Naive thymus-derived CD4-positive, alpha-beta T cell (primary cell): ENCODE measurements at regions of chr4 and their contacts with region 1.

Region 1: DNA sequence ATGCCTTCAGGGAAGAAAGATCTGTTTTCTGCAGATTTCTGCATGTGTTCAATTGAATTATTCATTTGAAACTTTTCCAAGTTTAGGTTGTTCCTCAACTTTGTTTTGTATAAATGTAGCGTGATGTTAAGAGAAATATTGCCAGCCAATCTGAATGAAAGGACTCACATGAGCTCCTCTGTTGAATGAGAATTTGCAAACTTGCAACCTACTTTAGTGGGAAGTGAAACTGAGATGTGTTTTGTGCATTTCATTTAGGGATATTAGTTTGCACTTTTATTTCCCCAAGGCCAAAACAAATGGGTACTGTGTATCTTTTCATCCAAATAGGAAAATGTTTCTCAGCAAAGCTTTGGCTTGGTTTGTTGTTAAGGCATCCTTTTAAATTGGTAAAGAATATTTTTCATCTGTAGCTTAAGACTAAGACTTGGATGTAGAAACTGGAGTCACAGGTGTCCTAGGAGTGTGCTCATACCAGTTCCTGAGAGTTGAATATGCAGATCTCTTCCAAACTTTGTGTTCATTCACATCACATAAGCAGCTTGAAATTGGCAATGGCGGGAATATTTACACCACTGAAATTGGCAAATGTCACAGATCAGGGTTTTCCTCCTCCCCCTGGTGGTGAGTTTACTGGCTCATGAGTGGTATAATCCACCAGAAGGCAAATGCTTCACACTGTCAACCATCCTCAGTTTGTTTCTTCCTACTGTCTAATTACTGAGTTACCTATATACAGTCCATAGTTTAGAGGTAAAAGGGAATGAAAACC is 193.6 kb upstream of the BANK1 start:
- DNase-seq: peak in 6 of 9 donors; percentile 2 to 33 (median 25)
- ATAC-seq: peak; percentile 32
- H3K4me3 ChIP-seq: no peak overlapping the region
- H3K4me3 Mint-ChIP-seq: no peak overlapping the region
- H3K27ac ChIP-seq: no peak overlapping the region
- H3K27ac Mint-ChIP-seq: no peak overlapping the region
- H3K4me1 ChIP-seq: no peaks in the 10 kb centered on the region
- H3K4me1 Mint-ChIP-seq: no peaks in the 10 kb centered on the region
- H3K27me3 ChIP-seq: no peaks in the 10 kb centered on the region
- H3K27me3 Mint-ChIP-seq: peaks cover 0 to 3% (median 0%) of the 10 kb centered on the region in 5 donors

Region 2: DNA sequence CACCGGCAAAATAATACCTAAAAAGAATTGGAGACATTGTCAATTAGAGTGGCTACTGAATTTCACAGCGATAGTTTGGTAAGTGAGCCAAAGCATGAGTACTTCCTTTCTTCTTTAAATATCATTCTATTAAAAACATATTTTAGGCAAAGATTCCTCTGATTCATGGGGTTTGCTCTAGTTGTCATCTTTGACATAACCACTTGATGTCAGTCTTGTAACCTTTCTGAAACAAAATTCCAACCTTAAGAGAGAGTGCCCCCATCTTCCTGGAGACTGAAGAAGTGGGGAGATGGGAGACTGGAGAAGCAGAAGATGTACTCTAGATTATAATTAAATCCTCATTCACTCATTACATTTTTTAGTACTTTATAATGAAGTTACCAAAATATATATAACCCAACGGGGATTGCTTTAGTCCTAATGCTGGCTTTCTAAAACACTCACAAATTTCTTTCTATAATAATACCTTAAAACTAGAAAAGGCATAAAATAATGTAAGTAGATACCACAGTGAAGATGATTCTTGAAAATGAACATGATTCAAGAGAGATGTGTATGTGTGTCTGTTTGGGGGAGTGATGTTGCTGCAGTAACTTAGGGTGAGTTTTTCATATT is 1175.5 kb before region 1 on chr4:
- CTCF ChIA-PET with region 1: no interaction called
- POLR2A ChIA-PET with region 1: no interaction called
- intact Hi-C with region 1: loop called in 1 of 2 experiments (anchors 1 kb)
- DNase-seq: peak in 3 of 9 donors; percentile 1 to 10 (median 1)
- ATAC-seq: no peak
- H3K4me3 ChIP-seq: no peak overlapping the region
- H3K4me3 Mint-ChIP-seq: no peak overlapping the region
- H3K27ac ChIP-seq: no peak overlapping the region
- H3K27ac Mint-ChIP-seq: no peak overlapping the region
- H3K4me1 ChIP-seq: no peaks in the 10 kb centered on the region
- H3K4me1 Mint-ChIP-seq: peaks cover 0 to 4% (median 0%) of the 10 kb centered on the region in 7 donors
- H3K27me3 ChIP-seq: no peaks in the 10 kb centered on the region
- H3K27me3 Mint-ChIP-seq: peaks cover 0 to 9% (median 0%) of the 10 kb centered on the region in 5 donors

Region 3: GRCh38 chr4:100848869-100849268 is 748.1 kb before region 1 on chr4:
- CTCF ChIA-PET with region 1: no interaction called
- POLR2A ChIA-PET with region 1: no interaction called
- intact Hi-C with region 1: loop called in 1 of 2 experiments (anchors 1 kb)
- DNase-seq: peak in 1 of 9 donors; percentile 1
- ATAC-seq: no peak
- H3K4me3 ChIP-seq: no peak overlapping the region
- H3K4me3 Mint-ChIP-seq: no peak overlapping the region
- H3K27ac ChIP-seq: no peak overlapping the region
- H3K27ac Mint-ChIP-seq: no peak overlapping the region
- H3K4me1 ChIP-seq: no peaks in the 10 kb centered on the region
- H3K4me1 Mint-ChIP-seq: no peaks in the 10 kb centered on the region
- H3K27me3 ChIP-seq: no peaks in the 10 kb centered on the region
- H3K27me3 Mint-ChIP-seq: no peaks in the 10 kb centered on the region

Region 4: GRCh38 chr4:100935090-100935489 is 661.9 kb before region 1 on chr4:
- CTCF ChIA-PET with region 1: interaction called, 5 read pairs
- POLR2A ChIA-PET with region 1: no interaction called
- intact Hi-C with region 1: loop called in 1 of 2 experiments (anchors 10 kb)
- DNase-seq: no peak
- ATAC-seq: no peak
- H3K4me3 ChIP-seq: no peak overlapping the region
- H3K4me3 Mint-ChIP-seq: no peak overlapping the region
- H3K27ac ChIP-seq: no peak overlapping the region
- H3K27ac Mint-ChIP-seq: no peak overlapping the region
- H3K4me1 ChIP-seq: no peaks in the 10 kb centered on the region
- H3K4me1 Mint-ChIP-seq: peaks cover 0 to 6% (median 0%) of the 10 kb centered on the region in 7 donors
- H3K27me3 ChIP-seq: no peaks in the 10 kb centered on the region
- H3K27me3 Mint-ChIP-seq: peaks cover 0 to 29% (median 15%) of the 10 kb centered on the region in 5 donors

Region 5: GRCh38 chr4:101169044-101170014 is 427.6 kb before region 1 on chr4:
- CTCF ChIA-PET with region 1: interaction called, 9 read pairs
- POLR2A ChIA-PET with region 1: no interaction called
- intact Hi-C with region 1: loop called (anchors 1 kb)
- DNase-seq: peak; percentile 9 to 64 (median 54)
- ATAC-seq: peak; percentile 96
- H3K4me3 ChIP-seq: no peak overlapping the region
- H3K4me3 Mint-ChIP-seq: no peak overlapping the region
- H3K27ac ChIP-seq: no peak overlapping the region
- H3K27ac Mint-ChIP-seq: no peak overlapping the region
- H3K4me1 ChIP-seq: no peaks in the 10 kb centered on the region
- H3K4me1 Mint-ChIP-seq: peaks cover 0 to 6% (median 3%) of the 10 kb centered on the region in 7 donors
- H3K27me3 ChIP-seq: no peaks in the 10 kb centered on the region
- H3K27me3 Mint-ChIP-seq: no peaks in the 10 kb centered on the region

Region 6: DNA sequence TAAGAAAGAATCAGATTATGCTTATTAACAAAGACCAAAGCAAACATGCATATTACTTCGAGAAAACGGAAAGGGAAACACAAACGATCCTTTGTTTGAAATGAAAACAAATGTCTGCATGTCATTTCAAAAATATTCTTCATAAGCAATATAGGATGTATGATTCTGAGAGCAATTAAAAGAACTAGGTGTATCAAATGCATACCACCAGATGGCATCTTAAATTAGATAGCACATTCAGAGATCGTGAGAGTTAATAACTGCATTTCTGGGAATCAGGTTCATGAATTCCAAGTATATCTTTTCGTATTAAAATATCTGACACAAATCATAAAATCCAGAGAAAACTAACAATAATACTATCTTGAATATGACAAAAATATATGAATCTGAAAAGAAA is 409.1 kb before region 1 on chr4:
- CTCF ChIA-PET with region 1: no interaction called
- POLR2A ChIA-PET with region 1: no interaction called
- intact Hi-C with region 1: loop called in 1 of 2 experiments (anchors 1 kb)
- DNase-seq: peak in 4 of 9 donors; percentile 7 to 27 (median 15)
- ATAC-seq: peak; percentile 42
- H3K4me3 ChIP-seq: no peak overlapping the region
- H3K4me3 Mint-ChIP-seq: peak overlapping the region in 1 of 10 donors; percentile 25
- H3K27ac ChIP-seq: no peak overlapping the region
- H3K27ac Mint-ChIP-seq: no peak overlapping the region
- H3K4me1 ChIP-seq: no peaks in the 10 kb centered on the region
- H3K4me1 Mint-ChIP-seq: peaks cover 7 to 41% (median 17%) of the 10 kb centered on the region in 7 donors
- H3K27me3 ChIP-seq: no peaks in the 10 kb centered on the region
- H3K27me3 Mint-ChIP-seq: no peaks in the 10 kb centered on the region

Region 7: GRCh38 chr4:101419324-101420135 is 177.4 kb before region 1 on chr4:
- CTCF ChIA-PET with region 1: no interaction called
- POLR2A ChIA-PET with region 1: no interaction called
- intact Hi-C with region 1: loop called in 1 of 2 experiments (anchors 5 kb)
- DNase-seq: peak in 5 of 9 donors; percentile 7 to 26 (median 24)
- ATAC-seq: no peak
- H3K4me3 ChIP-seq: no peak overlapping the region
- H3K4me3 Mint-ChIP-seq: peak overlapping the region in 6 of 10 donors; percentile 1 to 70 (median 12)
- H3K27ac ChIP-seq: no peak overlapping the region
- H3K27ac Mint-ChIP-seq: peak overlapping the region in 2 of 9 donors; percentile 41 to 65
- H3K4me1 ChIP-seq: peaks cover 33 to 36% of the 10 kb centered on the region in 2 donors
- H3K4me1 Mint-ChIP-seq: peaks cover 26 to 53% (median 39%) of the 10 kb centered on the region in 7 donors
- H3K27me3 ChIP-seq: peaks cover 0 to 11% of the 10 kb centered on the region in 2 donors
- H3K27me3 Mint-ChIP-seq: peaks cover 32 to 62% (median 41%) of the 10 kb centered on the region in 5 donors

Region 8: DNA sequence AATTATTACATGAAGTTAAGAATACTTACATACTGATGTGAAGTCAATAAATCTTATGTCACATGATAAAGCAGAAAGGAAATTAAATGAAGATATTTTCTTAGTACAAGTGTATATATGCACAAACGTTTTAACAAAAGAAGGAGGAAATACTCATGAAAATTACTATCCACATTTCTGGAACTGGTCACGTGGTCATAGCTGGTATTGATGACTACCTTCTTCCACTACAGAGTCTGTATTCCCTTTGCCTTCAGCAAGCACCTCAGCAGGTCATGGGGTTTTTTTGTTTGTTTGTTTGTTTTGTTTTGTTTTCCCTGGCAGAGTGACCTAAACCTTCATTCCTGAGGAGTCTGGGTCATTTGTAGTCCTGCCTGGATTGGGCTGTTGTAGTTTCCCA is 18.7 kb after region 1 on chr4:
- CTCF ChIA-PET with region 1: no interaction called
- POLR2A ChIA-PET with region 1: no interaction called
- intact Hi-C with region 1: no loop called
- DNase-seq: no peak
- ATAC-seq: no peak
- H3K4me3 ChIP-seq: no peak overlapping the region
- H3K4me3 Mint-ChIP-seq: no peak overlapping the region
- H3K27ac ChIP-seq: no peak overlapping the region
- H3K27ac Mint-ChIP-seq: no peak overlapping the region
- H3K4me1 ChIP-seq: no peaks in the 10 kb centered on the region
- H3K4me1 Mint-ChIP-seq: no peaks in the 10 kb centered on the region
- H3K27me3 ChIP-seq: no peaks in the 10 kb centered on the region
- H3K27me3 Mint-ChIP-seq: no peaks in the 10 kb centered on the region